Activated CD4-positive, alpha-beta T cell treated with anti-CD3 and anti-CD28 coated beads, Interleukin-2, amount 10 ng/mL, durations not matched to agents 24 days and 14 days (primary cell): ENCODE measurements at regions of chr6 and their contacts with region 1.

Region 1: GRCh38 chr6:163416557-163417253 is 2.2 kb downstream of the QKI start:
- DNase-seq: peak; percentile 81
- H3K4me3 Mint-ChIP-seq: peak overlapping the region; percentile 91
- H3K27ac Mint-ChIP-seq: peak overlapping the region; percentile 89
- H3K4me1 Mint-ChIP-seq: peaks cover 42% of the 10 kb centered on the region
- H3K27me3 Mint-ChIP-seq: no peaks in the 10 kb centered on the region

Region 2: GRCh38 chr6:163147994-163148393 is 268.7 kb before region 1 on chr6:
- intact Hi-C with region 1: no loop called
- DNase-seq: no peak
- H3K4me3 Mint-ChIP-seq: no peak overlapping the region
- H3K27ac Mint-ChIP-seq: no peak overlapping the region
- H3K4me1 Mint-ChIP-seq: no peaks in the 10 kb centered on the region
- H3K27me3 Mint-ChIP-seq: peaks cover 2% of the 10 kb centered on the region

Region 3: DNA sequence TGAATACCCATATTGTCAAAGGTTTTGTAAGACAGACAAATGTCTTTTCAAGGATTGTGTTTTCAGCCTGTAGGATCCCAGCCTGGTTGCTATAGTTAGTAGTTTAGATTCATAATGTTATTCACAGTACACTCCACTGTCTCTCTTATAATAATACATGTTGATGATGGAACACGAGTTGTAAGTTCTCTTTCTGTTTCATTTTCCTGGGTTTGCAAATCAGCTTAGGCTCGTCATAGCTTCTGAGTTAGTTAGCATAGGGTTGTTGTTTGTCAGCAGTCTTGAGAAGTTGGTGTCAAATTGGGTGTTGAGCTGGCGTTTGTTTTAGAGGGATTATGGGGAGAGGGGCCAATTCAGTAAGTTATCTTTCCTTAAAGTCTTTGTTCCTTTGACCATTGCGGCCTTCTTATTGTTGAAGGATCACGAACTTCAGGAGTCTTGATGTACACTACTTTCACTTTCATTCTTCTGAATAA is 43.6 kb after region 1 on chr6:
- intact Hi-C with region 1: loop called (anchors 1 kb)
- DNase-seq: peak; percentile 81
- H3K4me3 Mint-ChIP-seq: peak overlapping the region; percentile 86
- H3K27ac Mint-ChIP-seq: peak overlapping the region; percentile 90
- H3K4me1 Mint-ChIP-seq: peaks cover 58% of the 10 kb centered on the region
- H3K27me3 Mint-ChIP-seq: no peaks in the 10 kb centered on the region

Region 4: GRCh38 chr6:163554663-163555062 is 138.0 kb after region 1 on chr6:
- intact Hi-C with region 1: loop called (anchors 1 kb)
- DNase-seq: peak; percentile 87
- H3K4me3 Mint-ChIP-seq: no peak overlapping the region
- H3K27ac Mint-ChIP-seq: no peak overlapping the region
- H3K4me1 Mint-ChIP-seq: peaks cover 10% of the 10 kb centered on the region
- H3K27me3 Mint-ChIP-seq: no peaks in the 10 kb centered on the region